CD4-positive, alpha-beta memory T cell (primary cell): ENCODE measurements at regions of chr6 and their contacts with region 1.

Region 1: DNA sequence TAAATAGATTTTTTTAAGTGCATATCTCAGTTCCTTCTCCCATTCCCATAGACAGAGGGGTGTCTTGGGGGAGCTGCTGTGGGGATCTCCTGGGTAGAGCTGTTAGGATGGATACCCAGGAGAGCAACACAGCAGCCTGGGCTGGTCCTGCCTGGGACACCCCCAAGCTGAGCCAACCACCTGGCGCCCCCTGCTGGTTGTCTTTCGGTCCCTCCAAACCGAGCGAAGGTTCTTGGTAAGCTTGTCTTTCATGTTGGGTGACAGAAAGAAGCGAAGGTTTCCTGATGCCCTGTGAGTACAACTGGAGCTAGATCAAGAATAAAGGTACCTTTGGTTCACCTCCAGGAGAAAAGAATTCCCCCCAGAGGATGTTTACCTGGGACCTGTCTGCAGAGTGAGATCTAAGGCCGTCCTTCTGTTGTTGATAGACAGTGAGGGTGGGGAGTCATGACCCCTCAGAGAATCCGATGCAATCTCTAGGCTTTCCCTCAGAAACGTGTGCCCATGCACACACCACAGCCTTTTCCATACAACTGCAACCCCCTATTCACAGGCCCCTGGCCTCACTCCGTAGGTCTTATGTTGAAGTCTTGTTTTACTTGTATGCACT is 50.8 kb downstream of the SNX9 start:
- DNase-seq: peak; percentile 72 to 76 (median 75)
- H3K4me3 ChIP-seq: no peak overlapping the region
- H3K4me3 Mint-ChIP-seq: peak overlapping the region in 1 of 8 donors; percentile 40
- H3K27ac ChIP-seq: no peak overlapping the region
- H3K27ac Mint-ChIP-seq: peak overlapping the region in 5 of 7 donors; percentile 65 to 77 (median 75)
- H3K4me1 ChIP-seq: peaks cover 9% of the 10 kb centered on the region
- H3K4me1 Mint-ChIP-seq: peaks cover 6 to 21% (median 12%) of the 10 kb centered on the region in 4 donors
- H3K27me3 ChIP-seq: no peaks in the 10 kb centered on the region
- H3K27me3 Mint-ChIP-seq: no peaks in the 10 kb centered on the region

Region 2: GRCh38 chr6:157667211-157668008 is 206.4 kb before region 1 on chr6:
- CTCF ChIA-PET with region 1: interaction called, 7 read pairs
- POLR2A ChIA-PET with region 1: no interaction called
- intact Hi-C with region 1: loop called (anchors 2 kb)
- DNase-seq: peak in 4 of 5 donors; percentile 45 to 61 (median 51)
- H3K4me3 ChIP-seq: no peak overlapping the region
- H3K4me3 Mint-ChIP-seq: peak overlapping the region in 1 of 8 donors; percentile 16
- H3K27ac ChIP-seq: no peak overlapping the region
- H3K27ac Mint-ChIP-seq: peak overlapping the region in 3 of 7 donors; percentile 5 to 75 (median 53)
- H3K4me1 ChIP-seq: no peaks in the 10 kb centered on the region
- H3K4me1 Mint-ChIP-seq: peaks cover 3 to 5% (median 5%) of the 10 kb centered on the region in 4 donors
- H3K27me3 ChIP-seq: no peaks in the 10 kb centered on the region
- H3K27me3 Mint-ChIP-seq: peaks cover 2 to 4% of the 10 kb centered on the region in 2 donors

Region 3: DNA sequence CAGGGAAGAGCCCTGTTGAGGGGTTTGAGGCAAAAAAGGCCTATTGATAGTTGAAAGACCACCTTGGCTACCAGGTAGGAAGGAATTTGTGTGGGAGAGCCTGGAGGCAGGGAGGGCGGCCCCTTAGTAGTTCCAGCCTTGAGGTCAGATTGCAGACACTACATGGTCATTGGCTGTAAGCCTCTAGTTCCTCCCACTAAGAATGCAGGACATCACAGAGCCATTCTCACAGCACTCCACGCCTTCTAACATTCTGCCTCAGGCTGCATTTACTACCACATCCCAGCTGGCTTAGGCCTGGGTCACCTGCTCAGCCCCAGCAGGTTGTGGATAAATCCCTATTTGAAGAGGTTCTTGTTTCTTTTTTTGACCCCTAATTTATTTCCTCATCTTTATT is 141.8 kb before region 1 on chr6:
- CTCF ChIA-PET with region 1: no interaction called
- POLR2A ChIA-PET with region 1: no interaction called
- intact Hi-C with region 1: no loop called
- DNase-seq: no peak
- H3K4me3 ChIP-seq: no peak overlapping the region
- H3K4me3 Mint-ChIP-seq: no peak overlapping the region
- H3K27ac ChIP-seq: no peak overlapping the region
- H3K27ac Mint-ChIP-seq: no peak overlapping the region
- H3K4me1 ChIP-seq: no peaks in the 10 kb centered on the region
- H3K4me1 Mint-ChIP-seq: no peaks in the 10 kb centered on the region
- H3K27me3 ChIP-seq: no peaks in the 10 kb centered on the region
- H3K27me3 Mint-ChIP-seq: peaks cover 0 to 3% of the 10 kb centered on the region in 2 donors

Region 4: GRCh38 chr6:157823001-157823527 is 50.8 kb before region 1 on chr6 and contains the start of gene SNX9:
- CTCF ChIA-PET with region 1: no interaction called
- POLR2A ChIA-PET with region 1: interaction called, 3 read pairs
- intact Hi-C with region 1: loop called (anchors 1 kb)
- DNase-seq: peak; percentile 53 to 66 (median 58)
- H3K4me3 ChIP-seq: peak within 1 kb of the TSS; percentile 21 to 62
- H3K4me3 Mint-ChIP-seq: peak within 1 kb of the TSS; percentile 91 to 99 (median 96)
- H3K27ac ChIP-seq: peak within 1 kb of the TSS; percentile 78
- H3K27ac Mint-ChIP-seq: peak within 1 kb of the TSS; percentile 93 to 99 (median 98)
- H3K4me1 ChIP-seq: peaks cover 18% of the 10 kb centered on the region
- H3K4me1 Mint-ChIP-seq: peaks cover 18 to 32% (median 22%) of the 10 kb centered on the region in 4 donors
- H3K27me3 ChIP-seq: no peaks in the 10 kb centered on the region
- H3K27me3 Mint-ChIP-seq: peaks cover 0 to 1% of the 10 kb centered on the region in 2 donors
- total RNA-seq, gene SNX9: 21.5 to 21.9 TPM

Region 5: DNA sequence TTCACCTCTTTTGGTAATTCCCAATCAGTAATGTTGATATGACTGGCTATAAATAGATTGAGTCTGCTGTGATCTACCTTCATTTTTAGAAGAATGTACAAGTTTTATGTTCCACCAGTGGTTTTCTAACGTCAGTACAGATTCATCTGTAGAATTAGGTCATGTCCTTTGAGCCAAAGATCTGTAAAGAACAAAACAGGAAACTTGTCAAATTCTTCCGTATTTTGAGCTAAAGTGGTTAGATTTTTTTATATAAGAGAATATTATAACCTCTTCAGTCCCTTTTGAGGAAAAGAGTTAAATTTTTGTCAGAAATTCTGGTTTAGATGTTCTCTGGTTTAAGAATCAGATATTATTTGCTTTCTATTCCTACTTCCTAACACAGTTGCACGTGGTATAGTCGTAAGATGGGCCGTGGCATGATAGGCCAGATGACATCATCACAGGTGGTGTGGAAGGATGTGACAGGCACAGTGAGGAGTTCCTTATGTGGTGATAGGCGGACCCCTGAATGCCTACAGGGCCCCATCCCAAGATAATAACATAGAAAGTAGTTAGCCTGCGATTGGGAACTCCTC is 11.5 kb after region 1 on chr6:
- CTCF ChIA-PET with region 1: interaction called, 24 read pairs
- POLR2A ChIA-PET with region 1: interaction called, 5 read pairs
- intact Hi-C with region 1: no loop called
- DNase-seq: peak; percentile 73 to 88 (median 86)
- H3K4me3 ChIP-seq: peak overlapping the region in 1 of 2 donors; percentile 21
- H3K4me3 Mint-ChIP-seq: peak overlapping the region in 7 of 8 donors; percentile 7 to 78 (median 42)
- H3K27ac ChIP-seq: peak overlapping the region; percentile 55
- H3K27ac Mint-ChIP-seq: peak overlapping the region; percentile 90 to 98 (median 96)
- H3K4me1 ChIP-seq: peaks cover 35% of the 10 kb centered on the region
- H3K4me1 Mint-ChIP-seq: peaks cover 33 to 74% (median 44%) of the 10 kb centered on the region in 4 donors
- H3K27me3 ChIP-seq: no peaks in the 10 kb centered on the region
- H3K27me3 Mint-ChIP-seq: no peaks in the 10 kb centered on the region

Region 6: GRCh38 chr6:158002253-158002950 is 128.6 kb after region 1 on chr6:
- CTCF ChIA-PET with region 1: no interaction called
- POLR2A ChIA-PET with region 1: no interaction called
- intact Hi-C with region 1: no loop called
- DNase-seq: no peak
- H3K4me3 ChIP-seq: no peak overlapping the region
- H3K4me3 Mint-ChIP-seq: peak overlapping the region in 2 of 8 donors; percentile 3 to 76
- H3K27ac ChIP-seq: no peak overlapping the region
- H3K27ac Mint-ChIP-seq: peak overlapping the region; percentile 23 to 98 (median 89)
- H3K4me1 ChIP-seq: peaks cover 27% of the 10 kb centered on the region
- H3K4me1 Mint-ChIP-seq: peaks cover 42 to 73% (median 59%) of the 10 kb centered on the region in 4 donors
- H3K27me3 ChIP-seq: no peaks in the 10 kb centered on the region
- H3K27me3 Mint-ChIP-seq: no peaks in the 10 kb centered on the region